Psoas muscle (tissue), 8 donors: ENCODE measurements at regions of chr6 and their contacts with region 1.

Region 1: DNA sequence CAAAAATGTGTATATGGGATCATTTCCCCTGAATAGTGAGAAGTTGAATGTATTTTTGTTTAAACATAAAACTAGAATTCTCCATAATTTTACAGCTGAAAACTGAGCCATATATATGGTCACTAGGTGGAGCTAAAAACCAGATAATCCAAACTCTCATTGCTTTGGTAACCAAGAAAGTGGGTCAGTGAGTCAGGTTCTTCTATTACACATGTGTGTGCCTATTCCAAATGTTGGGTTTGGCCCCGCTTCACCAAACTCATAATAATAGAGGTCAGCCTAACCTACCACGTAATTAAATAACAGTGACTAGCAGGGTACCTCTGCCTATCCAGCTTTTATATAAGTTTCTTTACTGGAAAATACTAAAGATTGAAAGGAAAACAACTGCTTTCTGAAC is 19.3 kb upstream of the RNGTT start:
- DNase-seq: peak; percentile 37 to 69
- ATAC-seq: peak; percentile 98 to 100 (median 98)
- H3K4me3 ChIP-seq: peak overlapping the region; percentile 24
- H3K27ac ChIP-seq: peak overlapping the region; percentile 62
- H3K4me1 ChIP-seq: peaks cover 12% of the 10 kb centered on the region
- H3K27me3 ChIP-seq: no peaks in the 10 kb centered on the region
- CTCF ChIP-seq: peak; percentile 79

Region 2: GRCh38 chr6:89080542-89081422 is 98.1 kb after region 1 on chr6 and contains the start of gene PNRC1:
- intact Hi-C with region 1: loop called (anchors 1 to 10 kb)
- DNase-seq: peak; percentile 100
- ATAC-seq: peak; percentile 80 to 83 (median 82)
- H3K4me3 ChIP-seq: peak within 1 kb of the TSS; percentile 98
- H3K27ac ChIP-seq: peak within 1 kb of the TSS; percentile 100
- H3K4me1 ChIP-seq: peaks cover 28% of the 10 kb centered on the region
- H3K27me3 ChIP-seq: no peaks in the 10 kb centered on the region
- CTCF ChIP-seq: no peak
- total RNA-seq, gene PNRC1: 236 to 552 (median 436) TPM

Region 3: GRCh38 chr6:89122625-89123024 is 139.9 kb after region 1 on chr6:
- intact Hi-C with region 1: loop called (anchors 2 to 10 kb)
- DNase-seq: no peak
- ATAC-seq: peak; percentile 56 to 75 (median 70)
- H3K4me3 ChIP-seq: no peak overlapping the region
- H3K27ac ChIP-seq: no peak overlapping the region
- H3K4me1 ChIP-seq: peaks cover 12% of the 10 kb centered on the region
- H3K27me3 ChIP-seq: no peaks in the 10 kb centered on the region
- CTCF ChIP-seq: peak; percentile 66

Region 4: DNA sequence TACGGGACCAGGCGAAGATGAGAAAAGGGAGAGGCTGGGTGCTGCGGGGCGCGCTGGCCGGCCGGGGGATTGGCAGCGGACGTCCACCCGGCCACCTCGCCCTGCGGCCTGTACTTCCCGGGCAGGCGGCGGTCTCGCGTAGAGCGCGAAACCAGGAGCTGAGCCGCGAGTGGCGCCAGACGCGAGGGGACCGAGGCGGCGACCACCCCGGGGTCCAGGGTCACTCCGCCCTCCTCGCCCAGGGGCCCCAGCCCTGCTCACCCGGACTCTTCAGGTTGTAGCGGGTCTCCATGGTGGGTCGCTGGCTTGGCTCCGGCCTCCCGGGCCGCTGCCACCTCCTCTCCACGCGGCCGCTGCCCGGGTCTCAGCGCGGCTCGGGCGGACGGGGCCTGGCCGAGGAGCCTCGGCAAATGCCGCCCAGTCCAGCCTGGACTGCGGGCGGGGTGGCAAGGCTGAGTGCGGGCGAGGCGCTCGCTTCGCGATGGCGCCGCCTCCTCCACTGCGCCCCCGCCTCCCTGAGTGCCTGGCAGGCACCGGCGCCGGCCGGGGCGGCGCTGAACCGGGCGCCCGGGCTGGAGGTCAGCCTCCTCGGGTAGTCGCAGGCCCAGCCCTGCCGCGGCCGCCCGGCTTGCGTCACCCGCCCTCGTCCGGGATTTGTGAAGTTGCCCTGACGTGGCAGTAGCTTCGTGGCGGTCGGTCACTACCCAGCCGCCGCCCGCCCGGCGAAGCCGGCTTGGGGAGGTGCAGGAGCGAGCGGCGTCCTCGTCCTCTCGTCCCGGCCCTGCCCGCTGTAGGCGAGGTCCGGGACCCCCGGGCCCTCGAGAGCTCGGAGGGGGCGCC is 369.8 kb after region 1 on chr6 and contains the start of gene UBE2J1:
- intact Hi-C with region 1: loop called in 1 of 2 experiments (anchors 10 kb)
- DNase-seq: peak; percentile 95 to 97
- ATAC-seq: peak; percentile 94 to 97 (median 95)
- H3K4me3 ChIP-seq: peak within 1 kb of the TSS; percentile 92
- H3K27ac ChIP-seq: peak within 1 kb of the TSS; percentile 98
- H3K4me1 ChIP-seq: peaks cover 29% of the 10 kb centered on the region
- H3K27me3 ChIP-seq: no peaks in the 10 kb centered on the region
- CTCF ChIP-seq: no peak
- total RNA-seq, gene UBE2J1: 11.5 to 21.6 (median 17.4) TPM